CD8-positive, alpha-beta T cell (primary cell): ENCODE measurements at regions of chr4 and their contacts with region 1.

Region 1: DNA sequence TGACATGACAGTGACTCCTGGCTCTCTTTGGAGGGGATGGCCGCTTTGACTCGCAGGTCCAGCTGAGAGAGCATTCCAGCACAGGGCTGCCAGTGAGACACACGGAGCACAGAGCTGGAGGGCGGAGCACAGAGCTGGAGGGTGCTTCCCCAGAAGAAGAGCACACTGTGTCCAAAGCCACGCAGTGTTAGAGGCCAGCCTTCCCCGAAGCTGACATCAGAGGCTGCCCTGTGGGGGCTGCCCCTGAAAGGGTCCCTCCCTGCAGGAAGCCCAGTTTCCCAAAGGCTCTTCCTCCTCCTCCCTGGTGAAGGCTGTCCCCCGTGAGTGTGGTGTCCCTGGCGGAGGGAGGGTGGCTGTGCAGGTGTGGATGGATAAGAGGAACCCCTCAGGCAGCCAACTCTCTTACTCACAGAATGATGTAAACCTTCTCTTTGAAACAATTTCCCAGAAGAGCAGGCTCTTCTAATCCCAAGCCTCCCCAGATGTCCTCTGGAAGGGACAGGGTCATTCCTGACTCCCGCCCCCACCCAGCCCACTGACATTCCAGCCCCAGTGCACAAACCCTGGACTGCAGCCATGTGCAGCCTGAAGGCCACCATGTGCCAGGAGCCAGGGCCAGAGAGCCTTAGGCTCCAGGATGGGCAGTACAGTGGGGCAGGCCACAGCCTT is 53.4 kb downstream of the PSAPL1 start:
- DNase-seq: no peak
- ATAC-seq: no peak
- H3K4me3 ChIP-seq: no peak overlapping the region
- H3K4me3 Mint-ChIP-seq: no peak overlapping the region
- H3K27ac ChIP-seq: no peak overlapping the region
- H3K27ac Mint-ChIP-seq: no peak overlapping the region
- H3K4me1 ChIP-seq: no peaks in the 10 kb centered on the region
- H3K4me1 Mint-ChIP-seq: no peaks in the 10 kb centered on the region
- H3K27me3 ChIP-seq: no peaks in the 10 kb centered on the region
- H3K27me3 Mint-ChIP-seq: peaks cover 37% of the 10 kb centered on the region
- CTCF ChIP-seq: no peak

Region 2: GRCh38 chr4:6452897-6453687 is 928.3 kb before region 1 on chr4:
- CTCF ChIA-PET with region 1: no interaction called
- POLR2A ChIA-PET with region 1: no interaction called
- intact Hi-C with region 1: no loop called
- DNase-seq: no peak
- ATAC-seq: no peak
- H3K4me3 ChIP-seq: no peak overlapping the region
- H3K4me3 Mint-ChIP-seq: no peak overlapping the region
- H3K27ac ChIP-seq: no peak overlapping the region
- H3K27ac Mint-ChIP-seq: no peak overlapping the region
- H3K4me1 ChIP-seq: no peaks in the 10 kb centered on the region
- H3K4me1 Mint-ChIP-seq: no peaks in the 10 kb centered on the region
- H3K27me3 ChIP-seq: peaks cover 0 to 6% of the 10 kb centered on the region in 2 experiments
- H3K27me3 Mint-ChIP-seq: peaks cover 24% of the 10 kb centered on the region
- CTCF ChIP-seq: no peak

Region 3: GRCh38 chr4:7328898-7329638 is 52.3 kb before region 1 on chr4:
- CTCF ChIA-PET with region 1: no interaction called
- POLR2A ChIA-PET with region 1: no interaction called
- intact Hi-C with region 1: no loop called
- DNase-seq: no peak
- ATAC-seq: no peak
- H3K4me3 ChIP-seq: no peak overlapping the region
- H3K4me3 Mint-ChIP-seq: no peak overlapping the region
- H3K27ac ChIP-seq: no peak overlapping the region
- H3K27ac Mint-ChIP-seq: no peak overlapping the region
- H3K4me1 ChIP-seq: peaks cover 4% of the 10 kb centered on the region
- H3K4me1 Mint-ChIP-seq: peaks cover 3% of the 10 kb centered on the region
- H3K27me3 ChIP-seq: no peaks in the 10 kb centered on the region
- H3K27me3 Mint-ChIP-seq: peaks cover 3% of the 10 kb centered on the region
- CTCF ChIP-seq: no peak

Region 4: DNA sequence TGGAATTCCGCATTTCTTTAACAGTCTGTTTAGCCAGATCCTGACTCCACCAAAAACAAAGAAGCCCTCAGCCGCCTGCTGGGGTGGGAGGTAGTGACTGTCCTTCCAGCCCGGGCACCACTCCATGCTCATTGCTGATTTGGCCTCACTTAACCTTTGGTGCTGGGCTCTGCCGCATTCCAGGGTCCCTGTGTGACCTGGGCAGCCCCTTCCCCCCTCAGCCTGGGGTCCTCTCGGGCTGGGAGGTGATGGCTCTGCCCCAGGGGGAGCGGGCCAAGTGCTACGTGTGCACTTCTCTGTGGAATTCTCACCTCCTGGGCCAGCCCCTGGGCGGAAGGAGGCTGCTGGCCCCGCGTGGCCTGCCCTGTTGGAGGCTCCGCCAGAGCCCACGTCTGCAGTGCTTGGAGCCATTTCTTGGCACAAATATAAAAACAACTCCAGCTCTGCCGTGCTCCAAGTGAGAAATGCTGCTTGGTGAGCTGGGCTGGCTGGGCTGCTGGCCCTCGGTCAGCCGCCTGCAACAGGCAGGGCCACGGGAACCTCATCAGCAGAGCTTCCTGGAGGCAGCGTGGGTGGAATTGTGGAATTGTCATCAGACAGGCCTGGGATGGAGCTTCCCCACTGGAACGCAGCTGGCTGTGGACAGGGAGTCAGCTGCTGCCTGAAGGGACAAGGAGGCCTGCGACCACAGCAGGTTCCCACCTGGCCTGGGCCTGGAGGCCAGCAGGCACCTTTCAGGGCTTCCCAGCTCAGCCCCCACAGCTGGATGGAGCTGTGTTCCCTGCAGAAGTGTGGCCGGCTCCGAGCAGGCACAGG is 1125.2 kb after region 1 on chr4:
- CTCF ChIA-PET with region 1: no interaction called
- POLR2A ChIA-PET with region 1: no interaction called
- intact Hi-C with region 1: loop called in 1 of 2 experiments (anchors 10 kb)
- DNase-seq: no peak
- ATAC-seq: no peak
- H3K4me3 ChIP-seq: no peak overlapping the region
- H3K4me3 Mint-ChIP-seq: no peak overlapping the region
- H3K27ac ChIP-seq: no peak overlapping the region
- H3K27ac Mint-ChIP-seq: no peak overlapping the region
- H3K4me1 ChIP-seq: no peaks in the 10 kb centered on the region
- H3K4me1 Mint-ChIP-seq: no peaks in the 10 kb centered on the region
- H3K27me3 ChIP-seq: no peaks in the 10 kb centered on the region
- H3K27me3 Mint-ChIP-seq: no peaks in the 10 kb centered on the region
- CTCF ChIP-seq: no peak